ENCODE measurements at regions of chr2 and their contacts with region 1.

Region 1: GRCh38 chr2:191691016-191691735 is 13.2 kb downstream of the NABP1 start:
- DNase-seq: peak in 11 of 14 experiments; percentile 13 to 85 (median 39)
- ATAC-seq: peak; percentile 93
- H3K4me3 ChIP-seq: no peak overlapping the region
- H3K4me3 Mint-ChIP-seq: no peak overlapping the region
- H3K27ac ChIP-seq: no peak overlapping the region
- H3K27ac Mint-ChIP-seq: peak overlapping the region; percentile 44
- H3K4me1 ChIP-seq: no peaks in the 10 kb centered on the region
- H3K4me1 Mint-ChIP-seq: peaks cover 19% of the 10 kb centered on the region
- H3K27me3 ChIP-seq: no peaks in the 10 kb centered on the region
- H3K27me3 Mint-ChIP-seq: no peaks in the 10 kb centered on the region
- CTCF ChIP-seq: peak; percentile 87

Region 2: GRCh38 chr2:191566344-191566743 is 124.8 kb before region 1 on chr2:
- CTCF ChIA-PET with region 1: interaction called, 5 read pairs
- POLR2A ChIA-PET with region 1: interaction called, 7 read pairs
- intact Hi-C with region 1: loop called (anchors 1 kb)
- DNase-seq: peak; percentile 49 to 83 (median 60)
- ATAC-seq: peak; percentile 54
- H3K4me3 ChIP-seq: no peak overlapping the region
- H3K4me3 Mint-ChIP-seq: no peak overlapping the region
- H3K27ac ChIP-seq: no peak overlapping the region
- H3K27ac Mint-ChIP-seq: no peak overlapping the region
- H3K4me1 ChIP-seq: peaks cover 8% of the 10 kb centered on the region
- H3K4me1 Mint-ChIP-seq: peaks cover 18% of the 10 kb centered on the region
- H3K27me3 ChIP-seq: no peaks in the 10 kb centered on the region
- H3K27me3 Mint-ChIP-seq: peaks cover 12% of the 10 kb centered on the region
- CTCF ChIP-seq: peak; percentile 84

Region 3: DNA sequence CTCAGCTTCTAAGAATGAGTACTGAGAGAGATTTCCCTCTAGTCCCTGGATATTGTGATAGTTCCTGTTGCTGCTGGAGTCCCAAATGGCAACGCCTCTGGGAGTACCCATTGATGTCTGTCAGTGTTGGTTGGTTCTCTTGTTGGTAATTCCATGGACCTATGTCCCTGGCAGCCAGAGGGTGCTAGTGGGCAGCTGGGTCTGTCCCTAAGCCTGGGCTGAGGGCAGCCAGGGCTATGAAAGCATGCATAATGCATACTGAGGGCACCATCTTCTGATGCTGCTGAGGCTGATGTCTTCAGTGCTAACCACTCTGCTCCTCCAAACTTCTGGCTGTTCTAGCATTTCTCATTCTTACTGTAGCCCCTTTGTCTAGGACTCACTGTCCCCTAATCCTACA is 22.7 kb after region 1 on chr2:
- CTCF ChIA-PET with region 1: no interaction called
- POLR2A ChIA-PET with region 1: no interaction called
- intact Hi-C with region 1: no loop called
- DNase-seq: no peak
- ATAC-seq: no peak
- H3K4me3 ChIP-seq: no peak overlapping the region
- H3K4me3 Mint-ChIP-seq: no peak overlapping the region
- H3K27ac ChIP-seq: no peak overlapping the region
- H3K27ac Mint-ChIP-seq: no peak overlapping the region
- H3K4me1 ChIP-seq: no peaks in the 10 kb centered on the region
- H3K4me1 Mint-ChIP-seq: no peaks in the 10 kb centered on the region
- H3K27me3 ChIP-seq: no peaks in the 10 kb centered on the region
- H3K27me3 Mint-ChIP-seq: no peaks in the 10 kb centered on the region
- CTCF ChIP-seq: no peak